ENCODE measurements at regions of chr11 and their contacts with region 1.

Region 1: DNA sequence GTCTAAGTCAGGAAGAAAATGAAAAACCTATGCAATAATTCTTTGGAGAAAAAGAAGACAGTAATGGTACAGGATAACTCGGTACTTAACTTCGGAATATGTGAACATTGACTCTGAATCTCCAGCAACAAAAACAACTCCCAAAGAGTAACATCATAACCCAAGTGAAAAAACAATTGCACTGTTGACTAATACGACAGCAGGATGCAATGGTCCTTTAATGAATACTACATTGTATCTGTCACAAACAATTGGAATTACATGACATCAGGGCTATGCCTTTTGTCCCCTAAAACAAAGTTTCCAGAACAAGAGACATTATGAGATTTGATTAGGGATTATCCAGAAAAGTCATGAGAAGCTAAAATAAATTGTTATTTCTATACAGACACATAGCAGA is 1065.9 kb downstream of the LRRC4C start:
- DNase-seq: no peak
- H3K4me3 ChIP-seq: no peak overlapping the region
- H3K27ac ChIP-seq: no peak overlapping the region
- H3K4me1 ChIP-seq: no peaks in the 10 kb centered on the region
- H3K27me3 ChIP-seq: no peaks in the 10 kb centered on the region
- CTCF ChIP-seq: no peak
- EP300 ChIP-seq: no peak
- POLR2A ChIP-seq: no peak

Region 2: GRCh38 chr11:39011797-39012196 is 1381.7 kb before region 1 on chr11:
- in situ Hi-C with region 1: no loop called
- intact Hi-C with region 1: loop called (anchors 5 kb)
- DNase-seq: no peak
- H3K4me3 ChIP-seq: no peak overlapping the region
- H3K27ac ChIP-seq: no peak overlapping the region
- H3K4me1 ChIP-seq: no peaks in the 10 kb centered on the region
- H3K27me3 ChIP-seq: no peaks in the 10 kb centered on the region
- CTCF ChIP-seq: no peak
- EP300 ChIP-seq: no peak
- POLR2A ChIP-seq: no peak

Measured in transverse colon (tissue), 4 donors.